ENCODE measurements at regions of chr9 and their contacts with region 1.

Region 1: GRCh38 chr9:76032038-76032796 is 141.7 kb downstream of the PCSK5 start:
- DNase-seq: no peak
- ATAC-seq: no peak
- H3K4me3 ChIP-seq: peak overlapping the region; percentile 36 to 59
- H3K27ac ChIP-seq: peak overlapping the region in 1 of 2 donors; percentile 33
- H3K4me1 ChIP-seq: no peaks in the 10 kb centered on the region
- H3K27me3 ChIP-seq: no peaks in the 10 kb centered on the region

Region 2: GRCh38 chr9:75903785-75904360 is 128.3 kb before region 1 on chr9:
- intact Hi-C with region 1: loop called in 1 of 2 experiments (anchors 10 kb)
- DNase-seq: no peak
- ATAC-seq: no peak
- H3K4me3 ChIP-seq: no peak overlapping the region
- H3K27ac ChIP-seq: no peak overlapping the region
- H3K4me1 ChIP-seq: peaks cover 5 to 18% of the 10 kb centered on the region in 2 donors
- H3K27me3 ChIP-seq: no peaks in the 10 kb centered on the region